ENCODE measurements at regions of chr19 and their contacts with region 1.

Region 1: DNA sequence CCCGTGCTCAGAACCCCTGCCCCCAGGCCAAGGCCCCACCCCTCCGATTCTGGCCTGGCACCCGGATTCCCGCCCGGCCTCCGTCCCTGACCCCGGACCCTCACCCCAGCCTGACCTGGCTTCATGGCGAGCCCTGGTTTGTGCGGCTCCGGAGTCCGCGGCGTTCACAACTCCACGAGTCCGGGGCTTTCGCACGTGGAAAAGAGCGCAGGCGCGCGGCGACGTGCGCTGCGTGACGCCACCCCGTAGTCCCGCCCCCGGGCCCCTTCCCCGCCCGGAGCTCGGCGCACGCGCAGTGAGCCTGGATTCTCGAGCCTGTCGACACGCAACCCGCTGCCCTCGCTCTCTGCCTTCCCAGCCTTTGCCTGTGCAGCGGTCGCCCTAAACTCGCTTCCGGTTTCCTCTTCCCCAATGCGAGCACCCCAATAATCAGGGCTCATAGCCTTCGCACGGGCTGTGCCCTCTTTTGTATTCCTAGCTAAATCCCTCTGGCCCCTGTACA is at the start of gene FBL:
- DNase-seq: peak; percentile 93
- ATAC-seq: peak; percentile 85
- H3K4me3 Mint-ChIP-seq: peak within 1 kb of the TSS; percentile 94
- H3K27ac Mint-ChIP-seq: peak within 1 kb of the TSS; percentile 87
- H3K4me1 Mint-ChIP-seq: peaks cover 40% of the 10 kb centered on the region
- H3K27me3 Mint-ChIP-seq: peaks cover 6% of the 10 kb centered on the region
- CTCF ChIP-seq: no peak
- total RNA-seq, gene FBL: 576 to 620 TPM (median 610 TPM) in 3 replicates

Region 2: DNA sequence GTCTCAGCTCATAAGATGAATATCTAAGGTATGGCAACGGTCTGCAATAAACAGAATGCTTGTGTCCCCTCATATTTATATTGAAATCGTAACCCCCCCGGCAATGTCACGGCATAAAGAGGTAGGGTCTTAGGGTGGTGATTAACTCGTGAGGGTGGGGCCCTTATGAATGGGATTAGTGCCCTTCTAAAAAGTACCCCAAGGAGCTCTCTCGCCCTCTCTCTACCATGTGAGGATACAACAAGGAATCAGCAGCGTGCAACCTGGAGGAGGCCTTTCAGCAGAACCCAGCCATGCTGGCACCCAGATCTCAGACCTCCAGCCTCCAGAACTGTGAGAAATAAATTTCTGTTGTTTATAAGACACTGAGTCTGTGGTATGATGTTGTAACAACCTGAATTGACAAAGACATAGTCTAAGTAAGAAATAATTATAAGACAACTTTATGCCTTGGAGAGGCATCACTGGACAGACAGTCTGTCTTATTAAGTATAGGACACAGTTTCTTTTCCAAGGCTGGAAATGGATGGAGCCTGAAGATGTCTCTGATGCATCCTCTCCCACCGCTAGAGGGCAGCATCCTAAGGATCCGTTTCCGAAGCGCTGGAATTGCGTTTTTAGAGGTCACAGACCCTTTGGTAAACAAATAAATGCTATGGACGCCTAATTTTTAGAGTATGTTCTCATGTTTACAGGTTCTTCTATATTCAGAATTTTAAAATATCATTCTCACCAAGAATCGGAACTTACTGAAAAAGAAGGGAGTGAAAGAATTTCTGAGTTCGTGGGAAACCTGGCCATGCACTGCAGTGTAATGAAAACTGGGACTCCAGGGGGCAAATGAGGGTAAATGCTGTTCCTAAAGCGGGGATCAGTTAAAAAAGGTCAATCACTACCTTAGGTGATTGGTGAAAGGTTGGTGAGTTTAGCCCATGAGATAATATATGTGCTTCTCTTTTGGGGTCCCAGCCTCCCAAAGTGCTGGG is 80.8 kb before region 1 on chr19:
- CTCF ChIA-PET with region 1: interaction called, 17 read pairs
- POLR2A ChIA-PET with region 1: no interaction called
- DNase-seq: peak; percentile 73
- ATAC-seq: peak; percentile 38
- H3K4me3 Mint-ChIP-seq: no peak overlapping the region
- H3K27ac Mint-ChIP-seq: no peak overlapping the region
- H3K4me1 Mint-ChIP-seq: peaks cover 34% of the 10 kb centered on the region
- H3K27me3 Mint-ChIP-seq: peaks cover 2% of the 10 kb centered on the region; the same call in 1 of the 2 replicates
- CTCF ChIP-seq: peak; percentile 83

Region 3: GRCh38 chr19:39833464-39834286 is 12.6 kb before region 1 on chr19 and contains the start of gene DYRK1B:
- CTCF ChIA-PET with region 1: interaction called, 22 read pairs
- POLR2A ChIA-PET with region 1: interaction called, 11 read pairs
- DNase-seq: peak; percentile 96
- ATAC-seq: peak; percentile 91
- H3K4me3 Mint-ChIP-seq: peak within 1 kb of the TSS; percentile 72
- H3K27ac Mint-ChIP-seq: peak within 1 kb of the TSS; percentile 98
- H3K4me1 Mint-ChIP-seq: peaks cover 13% of the 10 kb centered on the region
- H3K27me3 Mint-ChIP-seq: no peaks in the 10 kb centered on the region
- CTCF ChIP-seq: no peak
- total RNA-seq, gene DYRK1B: 12.2 to 14.0 TPM (median 13.2 TPM) in 3 replicates